ENCODE measurements at regions of chr20 and their contacts with region 1.

Region 1: GRCh38 chr20:19205977-19206396 is 6.5 kb upstream of the SLC24A3 start:
- DNase-seq: peak; percentile 53 to 70 (median 69)
- H3K4me3 ChIP-seq: no peak overlapping the region
- H3K4me3 Mint-ChIP-seq: no peak overlapping the region
- H3K27ac ChIP-seq: no peak overlapping the region
- H3K27ac Mint-ChIP-seq: no peak overlapping the region
- H3K4me1 ChIP-seq: no peaks in the 10 kb centered on the region
- H3K4me1 Mint-ChIP-seq: no peaks in the 10 kb centered on the region
- H3K27me3 ChIP-seq: peaks cover 9 to 11% of the 10 kb centered on the region in 2 donors
- H3K27me3 Mint-ChIP-seq: peaks cover 7 to 17% (median 13%) of the 10 kb centered on the region in 3 donors
- CTCF ChIP-seq: peak; percentile 95

Region 2: DNA sequence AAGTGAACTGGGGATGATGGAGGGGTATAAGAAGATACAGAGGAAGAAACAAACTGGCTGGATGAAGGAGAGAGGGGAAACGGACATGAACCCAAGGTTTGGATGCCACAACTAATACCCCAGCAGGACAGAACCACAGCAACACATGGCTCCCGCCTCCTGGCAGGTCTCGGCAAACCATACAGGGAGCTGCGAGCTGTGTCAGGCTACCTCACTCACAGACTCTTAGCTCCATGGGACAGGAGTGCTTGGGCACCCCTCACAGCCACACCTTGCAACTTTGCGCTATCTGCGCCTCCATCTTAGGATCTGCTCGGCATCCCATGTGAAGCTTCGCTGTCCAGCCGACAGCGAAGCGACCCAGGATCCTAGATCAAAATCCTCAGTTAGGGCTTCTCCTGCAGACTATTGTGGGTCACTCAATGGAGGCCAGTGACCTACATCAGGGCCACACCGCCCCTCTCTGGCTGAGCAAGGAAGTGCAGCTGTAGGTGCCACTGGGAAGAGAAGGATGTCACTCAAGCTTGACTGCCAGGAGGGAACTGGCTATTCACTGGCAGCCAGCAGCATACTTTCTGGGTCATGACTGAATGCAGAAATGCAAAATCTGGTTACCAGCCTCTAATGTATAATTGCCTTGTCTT is 377.7 kb after region 1 on chr20:
- intact Hi-C with region 1: loop called (anchors 2 kb)
- DNase-seq: peak; percentile 38 to 56 (median 55)
- H3K4me3 ChIP-seq: no peak overlapping the region
- H3K4me3 Mint-ChIP-seq: no peak overlapping the region
- H3K27ac ChIP-seq: no peak overlapping the region
- H3K27ac Mint-ChIP-seq: no peak overlapping the region
- H3K4me1 ChIP-seq: no peaks in the 10 kb centered on the region
- H3K4me1 Mint-ChIP-seq: no peaks in the 10 kb centered on the region
- H3K27me3 ChIP-seq: no peaks in the 10 kb centered on the region
- H3K27me3 Mint-ChIP-seq: peaks cover 2 to 5% (median 3%) of the 10 kb centered on the region in 3 donors
- CTCF ChIP-seq: peak; percentile 85

Region 3: DNA sequence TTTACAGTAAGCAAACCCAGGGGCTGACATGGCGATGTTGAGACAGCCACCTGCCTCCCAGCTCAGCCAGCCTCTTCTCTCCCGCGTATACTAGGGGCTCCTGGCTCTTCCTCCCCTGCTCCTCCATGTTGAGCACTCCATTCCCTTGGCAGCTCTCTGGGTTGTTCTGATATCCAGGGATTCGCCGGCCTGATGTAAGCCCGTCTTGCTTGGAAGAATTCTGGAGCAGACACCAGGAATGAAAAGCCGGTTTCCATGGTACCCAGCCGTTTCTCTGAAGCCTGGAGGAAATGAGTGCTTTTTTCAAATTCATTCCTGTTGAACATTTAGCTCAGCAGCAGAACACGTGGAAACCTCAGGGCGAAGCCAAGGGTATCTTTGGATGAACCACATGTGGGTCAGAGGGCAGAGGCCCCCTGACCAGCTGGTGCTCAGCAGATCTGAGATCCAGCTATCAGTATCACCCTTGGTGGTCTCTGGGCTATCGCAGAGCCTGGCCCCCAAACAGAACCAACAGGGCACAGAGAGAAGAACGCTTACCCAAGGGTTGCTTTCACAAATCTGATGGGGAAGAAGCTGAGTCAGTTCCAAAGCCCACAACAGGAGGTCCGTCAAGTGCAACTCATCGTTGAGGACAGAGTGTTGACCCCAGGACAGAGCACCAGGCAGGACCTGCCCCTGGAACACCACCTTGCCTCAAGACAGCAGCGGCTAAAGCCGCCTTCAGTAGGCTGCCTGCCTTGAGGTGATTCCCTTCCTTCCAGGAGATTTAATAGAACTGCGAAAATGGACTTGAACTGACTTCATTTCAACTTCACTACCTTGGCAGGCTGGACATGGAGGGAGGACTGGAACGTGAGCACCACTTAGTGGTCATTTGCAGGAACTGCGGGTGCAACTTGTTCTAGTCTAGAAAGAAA is 456.0 kb after region 1 on chr20:
- intact Hi-C with region 1: loop called (anchors 1 to 5 kb)
- DNase-seq: peak; percentile 54 to 78 (median 67)
- H3K4me3 ChIP-seq: no peak overlapping the region
- H3K4me3 Mint-ChIP-seq: peak overlapping the region in 1 of 2 donors; percentile 5
- H3K27ac ChIP-seq: no peak overlapping the region
- H3K27ac Mint-ChIP-seq: peak overlapping the region in 1 of 7 donors; percentile 77
- H3K4me1 ChIP-seq: peaks cover 14 to 16% of the 10 kb centered on the region in 2 donors
- H3K4me1 Mint-ChIP-seq: peaks cover 14% of the 10 kb centered on the region
- H3K27me3 ChIP-seq: no peaks in the 10 kb centered on the region
- H3K27me3 Mint-ChIP-seq: peaks cover 4 to 10% (median 8%) of the 10 kb centered on the region in 3 donors
- CTCF ChIP-seq: peak; percentile 98

Measured in CD14-positive monocyte (primary cell).